ENCODE measurements at regions of chr16 and their contacts with region 1.

Region 1: GRCh38 chr16:10521681-10522274 is 58.6 kb downstream of the EMP2 start:
- DNase-seq: peak; percentile 72
- ATAC-seq: peak; percentile 80
- H3K4me3 ChIP-seq: no peak overlapping the region
- H3K4me3 Mint-ChIP-seq: no peak overlapping the region
- H3K27ac ChIP-seq: no peak overlapping the region
- H3K27ac Mint-ChIP-seq: no peak overlapping the region
- H3K4me1 ChIP-seq: peaks cover 0 to 3% of the 10 kb centered on the region in 2 donors
- H3K4me1 Mint-ChIP-seq: peaks cover 2% of the 10 kb centered on the region
- H3K27me3 ChIP-seq: no peaks in the 10 kb centered on the region
- H3K27me3 Mint-ChIP-seq: no peaks in the 10 kb centered on the region
- CTCF ChIP-seq: peak; percentile 93

Region 2: GRCh38 chr16:10266809-10267208 is 255.0 kb before region 1 on chr16:
- CTCF ChIA-PET with region 1: no interaction called
- POLR2A ChIA-PET with region 1: interaction called, 11 read pairs
- intact Hi-C with region 1: no loop called
- DNase-seq: no peak
- ATAC-seq: no peak
- H3K4me3 ChIP-seq: no peak overlapping the region
- H3K4me3 Mint-ChIP-seq: peak overlapping the region; percentile 11
- H3K27ac ChIP-seq: no peak overlapping the region
- H3K27ac Mint-ChIP-seq: peak overlapping the region; percentile 7
- H3K4me1 ChIP-seq: peaks cover 4 to 5% of the 10 kb centered on the region in 2 donors
- H3K4me1 Mint-ChIP-seq: peaks cover 7% of the 10 kb centered on the region
- H3K27me3 ChIP-seq: no peaks in the 10 kb centered on the region
- H3K27me3 Mint-ChIP-seq: no peaks in the 10 kb centered on the region
- CTCF ChIP-seq: no peak

Region 3: DNA sequence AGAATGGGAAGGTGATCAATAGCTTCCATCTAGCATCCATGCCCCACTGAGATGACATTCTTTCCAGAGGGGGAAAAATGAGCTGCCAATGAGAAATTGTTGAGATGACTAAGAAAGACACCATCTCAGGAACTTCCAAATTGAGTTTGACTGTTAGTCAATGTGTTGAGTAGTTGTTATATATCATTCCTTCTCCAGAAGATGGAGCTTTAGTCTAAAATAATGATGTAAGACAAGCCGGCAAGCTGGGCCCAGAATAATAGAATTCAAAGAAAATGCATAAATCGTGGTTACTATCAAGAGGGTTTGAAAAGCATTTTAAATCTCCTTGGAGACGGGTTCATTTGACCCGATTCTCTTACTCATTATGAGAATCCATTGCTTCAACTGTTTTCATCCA is 207.0 kb before region 1 on chr16:
- CTCF ChIA-PET with region 1: interaction called, 10 read pairs
- POLR2A ChIA-PET with region 1: no interaction called
- intact Hi-C with region 1: no loop called
- DNase-seq: peak; percentile 47
- ATAC-seq: peak; percentile 46
- H3K4me3 ChIP-seq: no peak overlapping the region
- H3K4me3 Mint-ChIP-seq: peak overlapping the region; percentile 23
- H3K27ac ChIP-seq: no peak overlapping the region
- H3K27ac Mint-ChIP-seq: peak overlapping the region; percentile 73
- H3K4me1 ChIP-seq: peaks cover 18 to 32% of the 10 kb centered on the region in 2 donors
- H3K4me1 Mint-ChIP-seq: peaks cover 28% of the 10 kb centered on the region
- H3K27me3 ChIP-seq: no peaks in the 10 kb centered on the region
- H3K27me3 Mint-ChIP-seq: no peaks in the 10 kb centered on the region
- CTCF ChIP-seq: peak; percentile 33

Region 4: GRCh38 chr16:10391339-10391738 is 130.4 kb before region 1 on chr16:
- CTCF ChIA-PET with region 1: no interaction called
- POLR2A ChIA-PET with region 1: no interaction called
- intact Hi-C with region 1: no loop called
- DNase-seq: no peak
- ATAC-seq: no peak
- H3K4me3 ChIP-seq: no peak overlapping the region
- H3K4me3 Mint-ChIP-seq: no peak overlapping the region
- H3K27ac ChIP-seq: no peak overlapping the region
- H3K27ac Mint-ChIP-seq: no peak overlapping the region
- H3K4me1 ChIP-seq: peaks cover 11 to 20% of the 10 kb centered on the region in 2 donors
- H3K4me1 Mint-ChIP-seq: peaks cover 47% of the 10 kb centered on the region
- H3K27me3 ChIP-seq: no peaks in the 10 kb centered on the region
- H3K27me3 Mint-ChIP-seq: no peaks in the 10 kb centered on the region
- CTCF ChIP-seq: no peak

Region 5: GRCh38 chr16:10473246-10473645 is 48.5 kb before region 1 on chr16:
- CTCF ChIA-PET with region 1: no interaction called
- POLR2A ChIA-PET with region 1: no interaction called
- intact Hi-C with region 1: no loop called
- DNase-seq: no peak
- ATAC-seq: no peak
- H3K4me3 ChIP-seq: no peak overlapping the region
- H3K4me3 Mint-ChIP-seq: no peak overlapping the region
- H3K27ac ChIP-seq: no peak overlapping the region
- H3K27ac Mint-ChIP-seq: no peak overlapping the region
- H3K4me1 ChIP-seq: no peaks in the 10 kb centered on the region
- H3K4me1 Mint-ChIP-seq: no peaks in the 10 kb centered on the region
- H3K27me3 ChIP-seq: no peaks in the 10 kb centered on the region
- H3K27me3 Mint-ChIP-seq: no peaks in the 10 kb centered on the region
- CTCF ChIP-seq: no peak

Region 6: GRCh38 chr16:10731790-10732189 is 210.0 kb after region 1 on chr16:
- CTCF ChIA-PET with region 1: interaction called, 203 read pairs
- POLR2A ChIA-PET with region 1: no interaction called
- intact Hi-C with region 1: no loop called
- DNase-seq: no peak
- ATAC-seq: no peak
- H3K4me3 ChIP-seq: no peak overlapping the region
- H3K4me3 Mint-ChIP-seq: no peak overlapping the region
- H3K27ac ChIP-seq: no peak overlapping the region
- H3K27ac Mint-ChIP-seq: no peak overlapping the region
- H3K4me1 ChIP-seq: no peaks in the 10 kb centered on the region
- H3K4me1 Mint-ChIP-seq: no peaks in the 10 kb centered on the region
- H3K27me3 ChIP-seq: no peaks in the 10 kb centered on the region
- H3K27me3 Mint-ChIP-seq: no peaks in the 10 kb centered on the region
- CTCF ChIP-seq: no peak